WTC11 (cell line): ENCODE measurements at regions of chr22 and their contacts with region 1.

Region 1: DNA sequence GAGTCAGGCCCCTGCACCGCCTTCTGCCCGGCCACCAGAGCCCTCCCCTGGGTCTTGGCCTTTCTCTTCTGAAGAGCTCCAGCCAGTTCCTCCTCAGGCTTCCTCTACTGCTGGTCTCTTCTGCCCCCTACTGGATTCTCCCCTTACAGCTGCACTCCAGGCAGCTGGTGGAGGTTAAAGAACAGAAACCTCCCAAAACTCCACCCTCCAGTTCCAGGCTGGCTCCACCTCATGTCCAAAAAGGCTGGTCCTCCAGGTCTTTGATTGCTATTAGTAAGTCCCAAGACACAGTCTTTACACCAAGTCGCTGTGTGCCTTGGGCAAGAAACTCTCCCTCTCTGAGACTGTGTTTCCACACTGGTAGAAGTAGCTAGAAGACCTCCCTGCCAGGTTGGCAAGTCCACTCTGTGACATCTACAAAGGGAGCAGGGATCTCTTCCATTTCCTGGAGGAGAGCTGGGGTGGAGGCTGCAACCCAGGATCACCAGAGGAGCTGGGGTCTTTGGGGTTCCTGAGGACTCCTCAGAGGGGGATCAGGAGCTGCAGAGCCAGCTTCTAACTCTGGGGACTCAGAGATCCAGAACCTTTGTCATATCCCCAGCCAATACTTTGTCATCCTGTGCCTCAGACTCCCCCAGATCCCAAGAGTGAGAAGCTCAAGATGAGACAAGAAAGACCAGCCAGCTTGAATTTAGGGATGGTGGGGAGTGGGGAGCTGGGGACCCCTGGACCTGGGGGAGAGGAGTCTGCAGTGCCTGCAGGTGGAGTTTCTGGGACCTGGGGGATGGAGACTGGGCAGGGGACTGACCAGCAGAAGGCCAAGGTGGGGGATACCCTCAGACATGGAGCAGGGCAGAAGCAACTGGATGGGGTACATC is 3.4 kb upstream of the IGLL5 start:
- DNase-seq: peak; percentile 83
- ATAC-seq: peak; percentile 96
- H3K4me3 Mint-ChIP-seq: no peak overlapping the region
- H3K27ac Mint-ChIP-seq: no peak overlapping the region
- H3K4me1 Mint-ChIP-seq: no peaks in the 10 kb centered on the region
- H3K27me3 Mint-ChIP-seq: peaks cover 83% of the 10 kb centered on the region
- CTCF ChIP-seq: peak; percentile 58

Region 2: DNA sequence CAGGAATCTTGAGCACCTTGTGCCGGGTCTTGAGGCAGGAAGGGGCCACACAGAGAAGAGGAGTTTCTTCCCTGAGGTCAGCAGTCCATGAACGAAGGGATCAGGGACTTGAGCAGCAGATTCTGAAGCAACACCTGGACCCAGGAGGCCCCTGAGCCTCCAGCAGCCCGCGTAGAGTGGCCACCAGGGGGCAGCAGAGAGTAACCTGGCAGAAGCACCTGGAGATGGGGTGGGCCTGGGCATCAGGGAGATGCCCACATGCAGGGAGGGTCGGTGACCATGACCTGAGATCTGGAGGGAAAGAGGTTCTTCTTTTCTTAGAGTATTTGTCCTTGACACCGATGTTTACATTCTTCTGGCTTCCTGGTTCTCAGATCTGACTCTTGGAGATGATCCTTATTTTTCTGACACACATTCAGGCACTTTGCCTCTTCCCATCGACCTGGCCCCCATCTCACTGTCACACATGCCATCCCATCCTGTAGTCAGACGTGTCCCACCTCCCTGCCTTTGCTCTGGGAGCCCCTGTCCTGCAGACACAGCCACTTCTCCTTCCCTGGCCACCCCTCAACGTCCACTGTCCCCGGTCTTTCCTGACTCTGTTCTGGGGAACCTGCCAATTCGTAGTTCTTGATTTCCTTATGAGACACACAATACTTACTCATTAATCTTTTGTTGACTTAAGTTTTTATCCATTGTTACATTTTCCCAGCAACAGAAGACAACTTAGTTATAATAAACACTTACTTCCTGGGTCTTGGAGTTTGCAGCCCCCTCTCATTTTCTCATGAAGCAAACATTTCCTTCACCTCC is 173.3 kb before region 1 on chr22:
- CTCF ChIA-PET with region 1: interaction called, 12 read pairs
- POLR2A ChIA-PET with region 1: no interaction called
- DNase-seq: peak; percentile 83
- ATAC-seq: peak; percentile 77
- H3K4me3 Mint-ChIP-seq: no peak overlapping the region
- H3K27ac Mint-ChIP-seq: no peak overlapping the region
- H3K4me1 Mint-ChIP-seq: no peaks in the 10 kb centered on the region
- H3K27me3 Mint-ChIP-seq: peaks cover 99% of the 10 kb centered on the region
- CTCF ChIP-seq: peak; percentile 96

Region 3: DNA sequence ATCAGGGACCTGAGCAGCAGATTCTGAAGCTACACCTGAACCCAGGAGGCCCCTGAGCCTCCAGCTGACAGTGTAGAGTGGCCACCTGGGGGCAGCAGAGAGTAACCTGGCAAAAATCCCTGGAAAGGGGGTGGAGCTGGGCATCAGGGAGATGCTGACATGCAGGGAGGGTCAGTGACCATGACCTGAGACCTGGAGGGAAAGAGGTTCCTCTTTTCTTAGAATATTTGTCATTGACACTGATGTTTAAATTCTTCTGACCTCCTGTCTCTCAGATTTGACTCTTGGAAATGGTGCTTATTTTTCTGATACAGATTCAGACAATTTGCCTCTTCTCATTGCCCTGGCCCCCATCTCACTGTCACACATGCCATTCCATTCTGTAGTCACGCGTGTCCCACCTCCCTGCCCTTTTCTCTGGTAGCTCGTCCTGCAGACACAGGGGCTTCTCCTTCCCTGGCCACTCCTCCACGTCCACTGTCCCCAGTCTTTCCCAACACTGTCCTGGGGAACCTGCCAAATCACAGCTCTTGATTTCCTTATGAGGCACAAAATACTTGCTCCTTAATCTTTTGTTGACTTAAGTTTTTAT is 113.9 kb before region 1 on chr22:
- CTCF ChIA-PET with region 1: interaction called, 61 read pairs
- POLR2A ChIA-PET with region 1: no interaction called
- DNase-seq: peak; percentile 84
- ATAC-seq: peak; percentile 88
- H3K4me3 Mint-ChIP-seq: no peak overlapping the region
- H3K27ac Mint-ChIP-seq: no peak overlapping the region
- H3K4me1 Mint-ChIP-seq: no peaks in the 10 kb centered on the region
- H3K27me3 Mint-ChIP-seq: peaks cover 99% of the 10 kb centered on the region
- CTCF ChIP-seq: peak; percentile 73; the same call in 1 of the 2 replicates

Region 4: DNA sequence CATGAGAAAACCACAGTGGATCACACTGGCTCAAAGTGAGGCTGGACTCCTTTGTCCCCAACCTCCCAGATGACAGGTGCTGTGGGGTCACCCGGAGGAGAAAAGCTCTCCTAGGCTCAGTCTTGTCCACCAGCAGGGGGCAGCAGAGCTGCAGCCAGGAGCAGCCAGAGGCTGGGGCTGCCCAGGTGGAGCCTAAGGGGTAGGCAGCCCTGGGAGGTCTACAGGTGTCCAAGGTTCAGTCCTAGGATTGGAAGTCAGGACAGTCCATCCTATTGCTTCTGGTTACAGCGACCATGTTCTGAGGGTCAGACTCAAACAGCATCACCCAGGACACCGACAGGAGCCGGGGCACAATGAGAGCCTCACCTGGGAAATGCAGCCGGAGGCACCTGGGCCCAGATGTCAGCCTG is 74.2 kb before region 1 on chr22:
- CTCF ChIA-PET with region 1: interaction called, 69 read pairs
- POLR2A ChIA-PET with region 1: no interaction called
- DNase-seq: peak; percentile 68
- ATAC-seq: peak; percentile 91
- H3K4me3 Mint-ChIP-seq: no peak overlapping the region
- H3K27ac Mint-ChIP-seq: no peak overlapping the region
- H3K4me1 Mint-ChIP-seq: no peaks in the 10 kb centered on the region
- H3K27me3 Mint-ChIP-seq: peaks cover 84% of the 10 kb centered on the region
- CTCF ChIP-seq: peak; percentile 66; the same call in 1 of the 2 replicates

Region 5: GRCh38 chr22:22855617-22856308 is 28.5 kb before region 1 on chr22:
- CTCF ChIA-PET with region 1: interaction called, 102 read pairs
- POLR2A ChIA-PET with region 1: no interaction called
- DNase-seq: peak; percentile 64
- ATAC-seq: peak; percentile 92
- H3K4me3 Mint-ChIP-seq: no peak overlapping the region
- H3K27ac Mint-ChIP-seq: no peak overlapping the region
- H3K4me1 Mint-ChIP-seq: no peaks in the 10 kb centered on the region
- H3K27me3 Mint-ChIP-seq: peaks cover 86% of the 10 kb centered on the region
- CTCF ChIP-seq: peak; percentile 46; the same call in 1 of the 2 replicates

Region 6: GRCh38 chr22:22903355-22903777 is 19.1 kb after region 1 on chr22:
- CTCF ChIA-PET with region 1: interaction called, 25 read pairs
- POLR2A ChIA-PET with region 1: no interaction called
- DNase-seq: no peak
- ATAC-seq: no peak
- H3K4me3 Mint-ChIP-seq: no peak overlapping the region
- H3K27ac Mint-ChIP-seq: no peak overlapping the region
- H3K4me1 Mint-ChIP-seq: no peaks in the 10 kb centered on the region
- H3K27me3 Mint-ChIP-seq: peaks cover 63% of the 10 kb centered on the region
- CTCF ChIP-seq: no peak